ENCODE measurements at regions of chr1 and their contacts with region 1.

Region 1: GRCh38 chr1:51897699-51898031 is 19.1 kb upstream of the NRDC start:
- DNase-seq: no peak
- ATAC-seq: no peak
- H3K4me3 ChIP-seq: no peak overlapping the region
- H3K4me3 Mint-ChIP-seq: no peak overlapping the region
- H3K27ac ChIP-seq: no peak overlapping the region
- H3K27ac Mint-ChIP-seq: no peak overlapping the region
- H3K4me1 ChIP-seq: no peaks in the 10 kb centered on the region
- H3K4me1 Mint-ChIP-seq: no peaks in the 10 kb centered on the region
- H3K27me3 ChIP-seq: peaks cover 9 to 15% of the 10 kb centered on the region in 2 experiments
- H3K27me3 Mint-ChIP-seq: peaks cover 65% of the 10 kb centered on the region
- CTCF ChIP-seq: no peak

Region 2: GRCh38 chr1:52002038-52002917 is 104.6 kb after region 1 on chr1:
- CTCF ChIA-PET with region 1: interaction called, 6 read pairs
- POLR2A ChIA-PET with region 1: no interaction called
- intact Hi-C with region 1: loop called (anchors 1 kb)
- DNase-seq: peak in 11 of 14 experiments; percentile 4 to 86 (median 32)
- ATAC-seq: peak; percentile 95
- H3K4me3 ChIP-seq: no peak overlapping the region
- H3K4me3 Mint-ChIP-seq: no peak overlapping the region
- H3K27ac ChIP-seq: no peak overlapping the region
- H3K27ac Mint-ChIP-seq: no peak overlapping the region
- H3K4me1 ChIP-seq: no peaks in the 10 kb centered on the region
- H3K4me1 Mint-ChIP-seq: no peaks in the 10 kb centered on the region
- H3K27me3 ChIP-seq: peaks cover 7 to 9% of the 10 kb centered on the region in 2 experiments
- H3K27me3 Mint-ChIP-seq: peaks cover 42% of the 10 kb centered on the region
- CTCF ChIP-seq: peak; percentile 86

Region 3: DNA sequence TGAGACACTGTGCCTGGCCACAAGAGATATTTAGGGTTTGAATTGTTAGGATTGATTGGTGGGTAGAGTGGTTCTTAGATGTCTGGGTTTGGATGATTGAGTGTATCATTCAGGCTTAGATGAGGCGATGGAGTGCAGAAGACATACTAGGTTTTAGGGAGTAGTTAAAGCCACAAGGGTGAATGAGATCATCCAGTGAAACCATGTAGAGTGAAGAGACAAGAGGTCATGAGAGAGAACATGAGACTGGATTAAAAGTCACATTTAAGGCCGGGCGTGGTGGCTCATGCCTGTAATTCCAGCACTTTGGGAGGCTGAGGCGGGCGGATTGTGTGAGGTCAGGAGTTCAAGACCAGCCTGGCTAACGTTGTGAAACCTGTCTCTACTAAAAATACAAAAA is 281.4 kb after region 1 on chr1:
- CTCF ChIA-PET with region 1: no interaction called
- POLR2A ChIA-PET with region 1: no interaction called
- intact Hi-C with region 1: no loop called
- DNase-seq: no peak
- ATAC-seq: no peak
- H3K4me3 ChIP-seq: no peak overlapping the region
- H3K4me3 Mint-ChIP-seq: no peak overlapping the region
- H3K27ac ChIP-seq: no peak overlapping the region
- H3K27ac Mint-ChIP-seq: no peak overlapping the region
- H3K4me1 ChIP-seq: no peaks in the 10 kb centered on the region
- H3K4me1 Mint-ChIP-seq: no peaks in the 10 kb centered on the region
- H3K27me3 ChIP-seq: no peaks in the 10 kb centered on the region
- H3K27me3 Mint-ChIP-seq: no peaks in the 10 kb centered on the region
- CTCF ChIP-seq: no peak

Region 4: GRCh38 chr1:52296345-52296744 is 398.7 kb after region 1 on chr1:
- CTCF ChIA-PET with region 1: no interaction called
- POLR2A ChIA-PET with region 1: no interaction called
- intact Hi-C with region 1: loop called in 1 of 2 experiments (anchors 5 kb)
- DNase-seq: peak in 3 of 14 experiments; percentile 42 to 49 (median 44)
- ATAC-seq: peak; percentile 41
- H3K4me3 ChIP-seq: no peak overlapping the region
- H3K4me3 Mint-ChIP-seq: no peak overlapping the region
- H3K27ac ChIP-seq: no peak overlapping the region
- H3K27ac Mint-ChIP-seq: no peak overlapping the region
- H3K4me1 ChIP-seq: no peaks in the 10 kb centered on the region
- H3K4me1 Mint-ChIP-seq: no peaks in the 10 kb centered on the region
- H3K27me3 ChIP-seq: no peaks in the 10 kb centered on the region
- H3K27me3 Mint-ChIP-seq: no peaks in the 10 kb centered on the region
- CTCF ChIP-seq: peak; percentile 70

Region 5: GRCh38 chr1:52748119-52748518 is 850.5 kb after region 1 on chr1:
- CTCF ChIA-PET with region 1: no interaction called
- POLR2A ChIA-PET with region 1: no interaction called
- intact Hi-C with region 1: loop called in 1 of 2 experiments (anchors 5 kb)
- DNase-seq: peak in 3 of 14 experiments; percentile 16 to 19 (median 18)
- ATAC-seq: no peak
- H3K4me3 ChIP-seq: no peak overlapping the region
- H3K4me3 Mint-ChIP-seq: no peak overlapping the region
- H3K27ac ChIP-seq: no peak overlapping the region
- H3K27ac Mint-ChIP-seq: no peak overlapping the region
- H3K4me1 ChIP-seq: no peaks in the 10 kb centered on the region
- H3K4me1 Mint-ChIP-seq: peaks cover 46% of the 10 kb centered on the region
- H3K27me3 ChIP-seq: no peaks in the 10 kb centered on the region
- H3K27me3 Mint-ChIP-seq: no peaks in the 10 kb centered on the region
- CTCF ChIP-seq: no peak

Region 6: DNA sequence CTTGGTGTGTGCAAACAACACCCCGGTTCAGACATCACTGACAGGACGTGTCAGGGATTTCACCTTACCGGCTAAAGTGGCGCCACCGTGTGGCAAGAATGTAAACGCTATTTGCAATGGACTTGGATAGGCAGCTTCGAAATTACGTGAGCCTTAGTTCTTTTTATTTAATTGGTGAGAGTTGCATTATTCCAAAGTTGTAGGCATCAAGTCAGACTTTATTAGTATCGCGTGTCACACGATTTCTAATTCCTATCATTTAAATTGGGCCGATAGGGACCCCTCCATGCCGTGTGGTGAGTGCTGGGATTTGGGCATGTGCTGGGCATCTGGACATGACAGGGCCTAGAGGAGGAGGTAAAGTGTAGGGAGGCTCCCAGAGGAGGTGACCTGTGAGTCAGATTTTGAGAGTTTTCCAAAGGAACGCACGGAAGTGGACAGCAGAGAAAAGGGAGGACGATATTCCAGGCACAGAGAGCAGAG is 1284.5 kb after region 1 on chr1:
- CTCF ChIA-PET with region 1: no interaction called
- POLR2A ChIA-PET with region 1: no interaction called
- intact Hi-C with region 1: loop called in 1 of 2 experiments (anchors 2 kb)
- DNase-seq: peak; percentile 69 to 88 (median 78)
- ATAC-seq: peak; percentile 81
- H3K4me3 ChIP-seq: no peak overlapping the region
- H3K4me3 Mint-ChIP-seq: no peak overlapping the region
- H3K27ac ChIP-seq: no peak overlapping the region
- H3K27ac Mint-ChIP-seq: no peak overlapping the region
- H3K4me1 ChIP-seq: peaks cover 4% of the 10 kb centered on the region
- H3K4me1 Mint-ChIP-seq: no peaks in the 10 kb centered on the region
- H3K27me3 ChIP-seq: peaks cover 0 to 2% of the 10 kb centered on the region in 2 experiments
- H3K27me3 Mint-ChIP-seq: peaks cover 6% of the 10 kb centered on the region
- CTCF ChIP-seq: peak; percentile 91